ENCODE measurements at regions of chrX and their contacts with region 1.

Region 1: DNA sequence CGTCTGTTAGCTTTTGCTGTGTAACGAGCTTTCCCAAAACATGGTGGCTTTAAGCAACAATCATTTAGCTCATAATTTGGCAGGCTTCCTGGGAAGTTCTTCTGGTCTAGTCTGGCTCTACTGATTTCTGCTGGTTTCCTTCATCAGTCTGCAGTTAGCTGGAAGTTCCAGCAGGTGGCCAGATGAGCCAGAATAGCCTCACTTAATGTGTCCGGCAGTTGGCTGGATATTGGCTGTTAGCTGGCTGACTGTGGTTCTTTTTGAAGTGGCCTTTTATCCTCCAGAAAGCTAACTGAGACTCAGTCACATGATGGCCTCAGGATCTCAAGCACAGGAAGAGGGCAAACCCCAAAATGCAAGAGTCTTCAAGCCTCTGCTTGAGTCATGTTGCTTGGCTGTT is 34.9 kb downstream of the FTHL17 start:
- DNase-seq: peak; percentile 11 to 37
- H3K4me3 ChIP-seq: no peak overlapping the region
- H3K27ac ChIP-seq: no peak overlapping the region
- H3K4me1 ChIP-seq: no peaks in the 10 kb centered on the region
- H3K27me3 ChIP-seq: no peaks in the 10 kb centered on the region
- CTCF ChIP-seq: peak; percentile 74

Region 2: DNA sequence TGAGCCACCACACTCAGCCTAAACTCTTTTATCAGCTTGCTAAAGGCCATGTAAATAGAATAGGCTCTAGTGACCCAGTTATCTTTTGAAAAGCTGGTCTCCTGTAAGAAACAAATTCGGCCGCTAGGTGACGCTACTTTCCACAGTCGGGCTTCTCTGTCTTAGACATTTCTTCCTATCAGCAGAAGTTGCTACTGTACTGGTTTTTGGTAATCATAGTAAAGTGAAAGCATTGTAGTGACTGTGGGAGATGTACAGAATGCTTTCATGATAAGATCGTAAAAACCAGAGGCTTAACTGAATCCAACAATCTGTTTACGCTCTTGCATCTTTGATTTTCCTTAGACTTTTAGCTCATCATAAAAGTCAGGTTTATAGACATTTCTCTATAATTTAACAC is 301.1 kb before region 1 on chrX:
- CTCF ChIA-PET with region 1: no interaction called
- POLR2A ChIA-PET with region 1: no interaction called
- intact Hi-C with region 1: loop called (anchors 5 kb)
- DNase-seq: peak in 1 of 2 experiments; percentile 51
- H3K4me3 ChIP-seq: no peak overlapping the region
- H3K27ac ChIP-seq: no peak overlapping the region
- H3K4me1 ChIP-seq: no peaks in the 10 kb centered on the region
- H3K27me3 ChIP-seq: no peaks in the 10 kb centered on the region
- CTCF ChIP-seq: peak; percentile 84

Region 3: DNA sequence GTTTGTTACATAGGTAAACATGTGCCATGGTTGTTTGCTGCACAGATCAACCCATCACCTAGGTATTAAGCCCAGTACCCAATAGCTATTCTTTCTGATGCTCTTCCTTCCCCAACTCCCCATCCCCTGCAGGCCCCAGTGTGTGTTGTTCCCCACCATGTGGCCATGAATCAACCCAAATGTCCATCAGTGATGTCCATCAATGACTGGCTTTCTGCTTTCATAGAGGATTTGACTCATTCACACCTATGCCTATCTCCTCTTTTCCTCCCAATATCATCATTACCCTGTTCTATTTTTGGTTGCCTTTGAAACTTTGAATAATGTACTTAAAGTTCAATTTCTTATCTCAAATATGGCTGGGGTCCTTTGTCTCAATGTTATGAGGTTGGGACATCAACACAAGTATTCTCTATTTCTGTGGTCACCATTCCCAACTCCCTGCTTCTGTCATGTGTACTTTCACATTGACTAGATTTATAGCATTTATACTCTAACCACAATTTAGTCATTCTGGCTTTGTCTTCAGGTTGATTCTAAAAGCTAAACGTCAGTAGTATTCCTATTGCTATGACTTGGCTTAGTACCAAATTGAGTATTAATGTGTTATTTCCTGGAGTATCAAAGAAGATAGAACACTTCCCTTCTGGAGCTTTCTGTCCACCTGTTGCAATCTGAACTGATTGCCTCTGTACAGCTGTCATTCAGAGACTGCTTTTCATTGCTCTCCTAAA is 255.0 kb before region 1 on chrX:
- CTCF ChIA-PET with region 1: no interaction called
- POLR2A ChIA-PET with region 1: interaction called, 12 read pairs
- intact Hi-C with region 1: no loop called
- DNase-seq: no peak
- H3K4me3 ChIP-seq: no peak overlapping the region
- H3K27ac ChIP-seq: no peak overlapping the region
- H3K4me1 ChIP-seq: no peaks in the 10 kb centered on the region
- H3K27me3 ChIP-seq: no peaks in the 10 kb centered on the region
- CTCF ChIP-seq: no peak

Region 4: DNA sequence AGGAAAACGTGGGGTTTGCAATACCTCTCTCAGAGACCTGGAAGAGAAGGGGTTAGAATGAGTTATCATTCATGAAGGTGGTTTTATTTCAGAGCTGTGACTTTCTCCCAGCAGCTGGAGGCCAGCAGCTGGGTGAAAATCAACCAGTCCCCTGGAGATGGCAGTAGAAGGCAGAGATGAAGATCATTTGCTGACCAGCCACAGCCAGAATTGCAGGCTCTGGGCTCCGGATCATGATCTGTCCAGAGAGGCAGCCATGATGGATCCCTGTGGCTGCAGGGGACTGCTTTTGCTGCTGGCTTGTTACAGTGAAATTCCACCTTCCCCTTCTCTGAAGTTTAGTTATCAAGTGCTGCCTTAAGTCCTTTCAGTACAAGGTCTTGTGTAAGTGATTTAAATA is 100.9 kb before region 1 on chrX:
- CTCF ChIA-PET with region 1: no interaction called
- POLR2A ChIA-PET with region 1: no interaction called
- intact Hi-C with region 1: loop called (anchors 5 kb)
- DNase-seq: peak in 1 of 2 experiments; percentile 17
- H3K4me3 ChIP-seq: no peak overlapping the region
- H3K27ac ChIP-seq: no peak overlapping the region
- H3K4me1 ChIP-seq: peaks cover 14% of the 10 kb centered on the region; the same call in 1 of the 2 replicates
- H3K27me3 ChIP-seq: no peaks in the 10 kb centered on the region
- CTCF ChIP-seq: 0 out of 2 replicates have a peak, but pooled peaks have one; percentile 34

Region 5: DNA sequence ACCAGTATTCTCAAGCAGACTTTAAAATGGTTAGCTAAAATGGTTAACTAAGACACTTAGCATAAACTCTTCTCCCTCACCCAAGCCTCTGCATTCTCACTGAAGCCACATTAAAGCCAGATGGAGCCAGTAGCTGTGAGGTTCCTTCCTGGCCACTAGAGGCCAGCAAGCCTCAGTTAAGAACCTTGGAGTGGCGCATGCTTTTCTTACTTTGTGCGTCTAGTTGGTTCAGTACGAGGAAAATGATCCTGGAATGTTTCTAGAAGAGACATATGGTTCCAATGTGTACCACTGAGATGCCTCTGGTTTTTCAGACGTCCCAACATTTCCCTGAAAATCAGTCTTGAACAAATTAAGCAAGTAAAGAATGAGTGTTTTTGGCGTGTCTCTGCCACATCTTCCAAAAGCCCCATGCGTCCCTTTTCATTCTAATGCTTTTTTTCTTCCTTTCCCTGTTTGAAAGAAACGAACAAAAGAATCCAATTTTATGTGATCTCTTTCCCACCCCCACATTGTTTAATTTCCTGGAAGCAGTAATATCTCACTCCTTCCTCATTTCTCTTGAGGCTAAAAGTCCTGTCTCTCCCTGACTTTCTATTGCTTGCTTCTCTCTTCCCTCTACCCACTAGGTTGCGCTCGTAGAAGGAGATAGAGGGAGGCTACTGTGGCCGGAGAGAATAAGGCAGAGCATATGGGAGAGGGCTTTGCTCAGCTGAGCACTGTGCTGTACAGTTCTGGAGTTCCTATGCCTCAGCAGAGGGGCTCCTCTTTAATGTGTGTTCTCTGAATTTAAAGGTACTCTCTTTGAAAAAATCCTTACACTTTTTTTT is 64.9 kb before region 1 on chrX:
- CTCF ChIA-PET with region 1: no interaction called
- POLR2A ChIA-PET with region 1: no interaction called
- intact Hi-C with region 1: no loop called
- DNase-seq: peak; percentile 3 to 37
- H3K4me3 ChIP-seq: no peak overlapping the region; the same call in 1 of the 2 replicates
- H3K27ac ChIP-seq: no peak overlapping the region
- H3K4me1 ChIP-seq: no peaks in the 10 kb centered on the region
- H3K27me3 ChIP-seq: no peaks in the 10 kb centered on the region
- CTCF ChIP-seq: peak; percentile 62

Region 6: GRCh38 chrX:31658360-31658759 is 621.5 kb after region 1 on chrX:
- CTCF ChIA-PET with region 1: interaction called, 3 read pairs
- POLR2A ChIA-PET with region 1: no interaction called
- intact Hi-C with region 1: loop called (anchors 5 kb)
- DNase-seq: no peak
- H3K4me3 ChIP-seq: no peak overlapping the region
- H3K27ac ChIP-seq: no peak overlapping the region
- H3K4me1 ChIP-seq: no peaks in the 10 kb centered on the region
- H3K27me3 ChIP-seq: no peaks in the 10 kb centered on the region
- CTCF ChIP-seq: peak; percentile 69

Measured in PC-9 (cell line).